Activated B cell treated with CpG ODN at 0.5 μM for 24 hours (primary cell): ENCODE measurements at regions of chr11 and their contacts with region 1.

Region 1: GRCh38 chr11:65988791-65989592 is 13.0 kb downstream of the EIF1AD start:
- DNase-seq: peak; percentile 67
- ATAC-seq: peak; percentile 99
- H3K4me3 Mint-ChIP-seq: no peak overlapping the region
- H3K27ac Mint-ChIP-seq: peak overlapping the region; percentile 62
- H3K4me1 Mint-ChIP-seq: peaks cover 5% of the 10 kb centered on the region
- H3K27me3 Mint-ChIP-seq: no peaks in the 10 kb centered on the region
- CTCF ChIP-seq: peak; percentile 75

Region 2: GRCh38 chr11:65720237-65720934 is 268.6 kb before region 1 on chr11 and contains the start of gene RNASEH2C:
- CTCF ChIA-PET with region 1: no interaction called
- POLR2A ChIA-PET with region 1: interaction called, 11 read pairs
- intact Hi-C with region 1: no loop called
- DNase-seq: peak; percentile 75
- ATAC-seq: peak; percentile 92
- H3K4me3 Mint-ChIP-seq: peak within 1 kb of the TSS; percentile 94
- H3K27ac Mint-ChIP-seq: peak within 1 kb of the TSS; percentile 83
- H3K4me1 Mint-ChIP-seq: peaks cover 29% of the 10 kb centered on the region
- H3K27me3 Mint-ChIP-seq: no peaks in the 10 kb centered on the region
- CTCF ChIP-seq: no peak
- total RNA-seq, gene RNASEH2C: 85.3 and 91.4 TPM in 2 replicates

Region 3: GRCh38 chr11:65779851-65780577 is 209.0 kb before region 1 on chr11:
- CTCF ChIA-PET with region 1: interaction called, 5 read pairs
- POLR2A ChIA-PET with region 1: no interaction called
- intact Hi-C with region 1: loop called (anchors 1 kb)
- DNase-seq: peak; percentile 78
- ATAC-seq: peak; percentile 63
- H3K4me3 Mint-ChIP-seq: peak overlapping the region; percentile 86
- H3K27ac Mint-ChIP-seq: peak overlapping the region; percentile 59
- H3K4me1 Mint-ChIP-seq: peaks cover 13% of the 10 kb centered on the region
- H3K27me3 Mint-ChIP-seq: no peaks in the 10 kb centered on the region
- CTCF ChIP-seq: no peak

Region 4: GRCh38 chr11:65919146-65920033 is 69.6 kb before region 1 on chr11 and contains the start of gene DRAP1:
- CTCF ChIA-PET with region 1: interaction called, 3 read pairs
- POLR2A ChIA-PET with region 1: no interaction called
- intact Hi-C with region 1: loop called (anchors 1 kb)
- DNase-seq: peak; percentile 95
- ATAC-seq: peak; percentile 87
- H3K4me3 Mint-ChIP-seq: peak within 1 kb of the TSS; percentile 93
- H3K27ac Mint-ChIP-seq: peak within 1 kb of the TSS; percentile 81
- H3K4me1 Mint-ChIP-seq: peaks cover 53% of the 10 kb centered on the region
- H3K27me3 Mint-ChIP-seq: no peaks in the 10 kb centered on the region
- CTCF ChIP-seq: no peak
- total RNA-seq, gene DRAP1: 64.7 and 75.8 TPM in 2 replicates

Region 5: GRCh38 chr11:66001942-66002647 is 13.1 kb after region 1 on chr11 and contains the starts of genes BANF1 and EIF1AD:
- CTCF ChIA-PET with region 1: interaction called, 4 read pairs
- POLR2A ChIA-PET with region 1: interaction called, 3 read pairs
- intact Hi-C with region 1: loop called (anchors 1 kb)
- DNase-seq: peak; percentile 86
- ATAC-seq: peak; percentile 82
- H3K4me3 Mint-ChIP-seq: peak within 1 kb of the TSS; percentile 100
- H3K27ac Mint-ChIP-seq: peak within 1 kb of the TSS; percentile 98
- H3K4me1 Mint-ChIP-seq: peaks cover 36% of the 10 kb centered on the region
- H3K27me3 Mint-ChIP-seq: no peaks in the 10 kb centered on the region
- CTCF ChIP-seq: no peak
- total RNA-seq, gene BANF1: 220 and 228 TPM in 2 replicates
- total RNA-seq, gene EIF1AD: 50.7 and 58.9 TPM in 2 replicates

Region 6: DNA sequence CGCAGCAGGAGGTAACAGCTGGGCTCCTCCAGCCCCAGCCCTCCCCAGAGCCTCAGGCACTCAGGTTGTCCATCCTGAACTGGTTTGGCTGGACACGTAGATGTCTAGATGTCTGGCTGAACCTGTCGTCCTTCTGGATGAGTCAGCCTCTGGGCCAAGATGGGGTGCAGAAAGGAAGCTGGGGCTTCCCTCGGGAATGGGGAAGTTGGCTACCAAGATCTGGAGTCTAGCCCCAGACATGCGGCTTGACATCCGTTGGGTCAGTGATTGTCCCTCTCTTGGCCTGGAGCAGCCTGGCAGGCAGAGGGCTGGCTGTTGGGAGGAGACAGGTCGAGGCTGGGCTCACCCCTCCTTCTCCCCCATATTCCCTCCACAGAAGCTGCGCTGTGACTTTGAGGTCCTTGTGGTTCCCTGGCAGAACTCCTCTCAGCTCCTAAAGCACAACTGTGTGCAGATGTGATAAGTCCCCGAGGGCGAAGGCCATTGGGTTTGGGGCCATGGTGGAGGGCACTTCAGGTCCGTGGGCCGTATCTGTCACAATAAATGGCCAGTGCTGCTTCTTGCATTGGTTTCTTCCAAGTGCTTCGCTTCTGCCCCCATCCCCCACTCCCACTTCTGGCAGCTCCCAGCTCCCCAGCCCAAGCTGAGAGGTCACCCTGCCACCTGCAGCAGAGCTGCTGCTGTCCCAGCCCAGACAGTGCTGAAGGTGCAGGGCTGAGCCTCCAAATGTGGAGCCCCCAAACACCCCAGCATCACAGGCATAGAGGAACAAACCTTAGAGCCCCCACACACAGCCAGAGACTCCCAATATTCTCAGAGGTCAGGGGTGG is 24.2 kb after region 1 on chr11:
- CTCF ChIA-PET with region 1: no interaction called
- POLR2A ChIA-PET with region 1: no interaction called
- intact Hi-C with region 1: no loop called
- DNase-seq: no peak
- ATAC-seq: no peak
- H3K4me3 Mint-ChIP-seq: no peak overlapping the region
- H3K27ac Mint-ChIP-seq: no peak overlapping the region
- H3K4me1 Mint-ChIP-seq: no peaks in the 10 kb centered on the region
- H3K27me3 Mint-ChIP-seq: peaks cover 13% of the 10 kb centered on the region
- CTCF ChIP-seq: no peak

Region 7: DNA sequence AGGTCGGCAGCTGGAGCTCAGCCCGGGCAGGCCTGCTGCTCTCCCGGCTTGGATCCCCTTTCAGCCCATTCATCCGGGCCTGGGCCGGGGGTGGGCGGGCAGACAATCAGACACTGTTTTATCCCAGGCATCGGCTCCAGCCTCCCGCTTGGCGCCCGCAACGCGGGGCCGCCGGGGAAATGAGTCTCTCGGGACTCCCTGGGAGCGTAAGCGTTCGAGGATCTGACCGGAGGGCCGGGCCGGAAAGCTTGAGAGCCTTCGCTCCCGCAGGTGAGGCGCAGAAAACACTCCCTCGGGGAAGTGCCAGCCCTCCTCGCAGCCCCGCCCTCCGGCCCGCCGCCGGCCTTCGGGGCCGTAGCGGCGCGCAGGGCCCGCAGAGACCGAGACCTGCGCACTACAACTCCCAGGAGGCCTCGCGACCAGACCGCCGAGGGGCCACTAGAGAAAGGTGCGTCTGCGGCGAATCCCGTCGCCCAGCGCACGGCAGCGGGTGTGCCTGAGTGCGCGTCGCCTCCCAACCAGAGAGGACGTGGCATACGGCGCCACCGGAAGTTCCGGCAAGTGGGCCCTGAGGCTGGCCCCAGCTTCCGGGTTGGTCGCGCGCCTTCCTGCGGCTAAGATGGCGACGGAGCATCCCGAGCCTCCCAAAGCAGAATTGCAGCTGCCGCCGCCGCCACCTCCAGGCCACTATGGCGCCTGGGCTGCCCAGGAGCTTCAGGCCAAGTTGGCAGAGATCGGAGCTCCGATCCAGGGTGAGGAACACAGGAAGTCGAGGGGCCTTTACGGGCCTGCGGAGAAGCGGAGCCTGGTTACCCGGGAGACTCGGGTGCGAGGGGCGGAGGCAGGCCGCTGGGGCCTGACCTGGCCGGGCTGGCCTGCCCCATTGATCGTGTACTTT is 63.0 kb after region 1 on chr11 and contains the start of gene SF3B2:
- CTCF ChIA-PET with region 1: no interaction called
- POLR2A ChIA-PET with region 1: no interaction called
- intact Hi-C with region 1: no loop called
- DNase-seq: peak; percentile 91
- ATAC-seq: peak; percentile 97
- H3K4me3 Mint-ChIP-seq: peak within 1 kb of the TSS; percentile 99
- H3K27ac Mint-ChIP-seq: peak within 1 kb of the TSS; percentile 96
- H3K4me1 Mint-ChIP-seq: peaks cover 27% of the 10 kb centered on the region
- H3K27me3 Mint-ChIP-seq: peaks cover 8% of the 10 kb centered on the region
- CTCF ChIP-seq: no peak
- total RNA-seq, gene SF3B2: 198 and 219 TPM in 2 replicates

Region 8: GRCh38 chr11:66136752-66137123 is 147.7 kb after region 1 on chr11:
- CTCF ChIA-PET with region 1: no interaction called
- POLR2A ChIA-PET with region 1: no interaction called
- intact Hi-C with region 1: loop called (anchors 1 kb)
- DNase-seq: no peak
- ATAC-seq: no peak
- H3K4me3 Mint-ChIP-seq: no peak overlapping the region
- H3K27ac Mint-ChIP-seq: peak overlapping the region; percentile 47
- H3K4me1 Mint-ChIP-seq: peaks cover 84% of the 10 kb centered on the region
- H3K27me3 Mint-ChIP-seq: no peaks in the 10 kb centered on the region
- CTCF ChIP-seq: no peak

Region 9: DNA sequence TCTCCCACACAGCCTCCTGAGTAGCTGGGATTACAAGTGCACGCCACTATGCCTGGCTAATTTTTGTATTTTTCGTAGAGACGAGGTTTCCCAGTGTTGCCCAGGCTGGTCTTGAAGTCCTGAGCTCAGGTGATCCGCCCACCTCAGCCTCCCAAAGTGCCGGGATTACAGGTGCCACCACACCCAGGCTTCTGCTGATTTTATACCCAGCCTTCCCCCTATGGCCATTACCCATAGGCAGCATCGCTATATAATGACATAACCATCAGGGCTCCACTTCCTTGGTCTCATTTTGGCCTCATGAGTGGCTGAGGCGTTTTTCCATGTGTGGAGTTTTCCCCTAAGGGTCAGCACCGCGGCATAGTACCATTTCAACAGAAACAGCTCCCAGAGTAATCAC is 218.9 kb after region 1 on chr11:
- CTCF ChIA-PET with region 1: no interaction called
- POLR2A ChIA-PET with region 1: no interaction called
- intact Hi-C with region 1: no loop called
- DNase-seq: no peak
- ATAC-seq: no peak
- H3K4me3 Mint-ChIP-seq: no peak overlapping the region
- H3K27ac Mint-ChIP-seq: no peak overlapping the region
- H3K4me1 Mint-ChIP-seq: peaks cover 4% of the 10 kb centered on the region
- H3K27me3 Mint-ChIP-seq: no peaks in the 10 kb centered on the region
- CTCF ChIP-seq: no peak